ENCODE measurements at regions of chr19 and their contacts with region 1.

Region 1: DNA sequence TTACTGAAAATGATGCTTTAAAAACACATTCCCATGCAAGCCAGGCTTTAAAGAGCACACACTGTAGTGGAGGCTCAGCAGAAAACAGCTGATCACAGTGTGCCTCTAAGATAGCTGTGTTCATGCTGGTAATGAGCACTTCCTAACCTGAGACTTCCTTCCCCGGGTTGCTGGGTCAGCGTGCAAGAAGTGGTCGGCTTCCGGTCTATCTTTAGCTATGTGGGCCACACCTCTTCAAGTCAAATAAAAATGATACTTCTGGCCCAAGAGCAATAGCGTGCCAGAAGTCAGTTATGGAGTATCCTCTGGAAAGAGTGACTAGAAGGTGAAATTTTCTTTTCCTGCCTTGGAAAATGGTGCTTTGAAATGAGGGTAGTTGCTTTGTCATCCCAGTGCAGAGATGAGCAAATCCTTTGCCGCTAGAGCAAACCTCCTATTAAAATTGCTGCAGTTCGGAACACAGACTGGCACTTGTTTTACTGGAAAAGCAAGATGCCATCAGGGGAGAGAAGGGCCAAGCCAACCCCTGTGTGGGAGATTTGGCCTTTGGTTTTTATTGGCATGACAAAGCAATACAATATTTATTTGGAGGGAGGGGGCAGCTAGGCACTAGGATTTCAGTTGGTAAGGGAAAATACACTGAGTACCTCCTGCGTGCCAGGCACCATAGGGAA is 64.2 kb downstream of the ARHGAP35 start:
- DNase-seq: peak; percentile 36 to 43
- H3K4me3 ChIP-seq: no peak overlapping the region
- H3K27ac ChIP-seq: peak overlapping the region; percentile 25 to 76 (median 72)
- H3K4me1 ChIP-seq: peaks cover 51 to 57% of the 10 kb centered on the region in 2 donors
- H3K27me3 ChIP-seq: no peaks in the 10 kb centered on the region
- CTCF ChIP-seq: no peak
- POLR2A ChIP-seq: no peak

Region 2: GRCh38 chr19:46863818-46864611 is 61.0 kb before region 1 on chr19:
- intact Hi-C with region 1: no loop called
- DNase-seq: peak; percentile 82 to 89
- H3K4me3 ChIP-seq: no peak overlapping the region
- H3K27ac ChIP-seq: peak overlapping the region; percentile 44 to 98 (median 94)
- H3K4me1 ChIP-seq: peaks cover 56 to 75% of the 10 kb centered on the region in 2 donors
- H3K27me3 ChIP-seq: no peaks in the 10 kb centered on the region
- CTCF ChIP-seq: no peak
- POLR2A ChIP-seq: peak in 1 of 2 donors; percentile 42

Region 3: GRCh38 chr19:46878613-46879375 is 46.2 kb before region 1 on chr19:
- intact Hi-C with region 1: loop called (anchors 10 kb)
- DNase-seq: no peak
- H3K4me3 ChIP-seq: no peak overlapping the region
- H3K27ac ChIP-seq: no peak overlapping the region
- H3K4me1 ChIP-seq: no peaks in the 10 kb centered on the region
- H3K27me3 ChIP-seq: no peaks in the 10 kb centered on the region
- CTCF ChIP-seq: no peak
- POLR2A ChIP-seq: no peak